ENCODE measurements at regions of chr3 and their contacts with region 1.

Region 1: GRCh38 chr3:99526921-99527320 is 111.5 kb upstream of the COL8A1 start:
- DNase-seq: no peak
- H3K4me3 ChIP-seq: no peak overlapping the region
- CTCF ChIP-seq: no peak

Region 2: DNA sequence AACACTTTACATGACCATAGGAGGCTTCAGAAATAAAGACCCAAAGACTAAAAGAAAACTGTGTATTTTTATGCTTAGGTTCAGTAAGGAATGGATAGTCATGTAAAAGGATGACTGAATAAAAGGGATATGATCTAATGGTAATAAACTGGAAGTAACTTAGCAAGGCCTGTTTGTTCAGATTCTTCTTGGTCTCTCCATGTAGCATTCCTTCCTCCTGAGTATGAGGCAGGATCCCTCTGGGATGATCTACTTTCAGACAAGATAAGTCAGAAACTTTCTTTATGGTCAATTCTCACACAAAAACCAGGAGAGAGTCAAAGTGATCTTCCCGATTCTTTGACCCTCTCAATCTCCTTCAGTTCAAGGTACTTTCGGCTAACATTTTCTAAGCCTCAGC is 284.6 kb before region 1 on chr3:
- CTCF ChIA-PET with region 1: no interaction called
- POLR2A ChIA-PET with region 1: no interaction called
- DNase-seq: peak; percentile 79
- H3K4me3 ChIP-seq: no peak overlapping the region
- CTCF ChIP-seq: no peak

Region 3: GRCh38 chr3:99568663-99569328 is 41.9 kb after region 1 on chr3:
- CTCF ChIA-PET with region 1: no interaction called
- POLR2A ChIA-PET with region 1: no interaction called
- DNase-seq: no peak
- H3K4me3 ChIP-seq: no peak overlapping the region
- CTCF ChIP-seq: no peak

Region 4: DNA sequence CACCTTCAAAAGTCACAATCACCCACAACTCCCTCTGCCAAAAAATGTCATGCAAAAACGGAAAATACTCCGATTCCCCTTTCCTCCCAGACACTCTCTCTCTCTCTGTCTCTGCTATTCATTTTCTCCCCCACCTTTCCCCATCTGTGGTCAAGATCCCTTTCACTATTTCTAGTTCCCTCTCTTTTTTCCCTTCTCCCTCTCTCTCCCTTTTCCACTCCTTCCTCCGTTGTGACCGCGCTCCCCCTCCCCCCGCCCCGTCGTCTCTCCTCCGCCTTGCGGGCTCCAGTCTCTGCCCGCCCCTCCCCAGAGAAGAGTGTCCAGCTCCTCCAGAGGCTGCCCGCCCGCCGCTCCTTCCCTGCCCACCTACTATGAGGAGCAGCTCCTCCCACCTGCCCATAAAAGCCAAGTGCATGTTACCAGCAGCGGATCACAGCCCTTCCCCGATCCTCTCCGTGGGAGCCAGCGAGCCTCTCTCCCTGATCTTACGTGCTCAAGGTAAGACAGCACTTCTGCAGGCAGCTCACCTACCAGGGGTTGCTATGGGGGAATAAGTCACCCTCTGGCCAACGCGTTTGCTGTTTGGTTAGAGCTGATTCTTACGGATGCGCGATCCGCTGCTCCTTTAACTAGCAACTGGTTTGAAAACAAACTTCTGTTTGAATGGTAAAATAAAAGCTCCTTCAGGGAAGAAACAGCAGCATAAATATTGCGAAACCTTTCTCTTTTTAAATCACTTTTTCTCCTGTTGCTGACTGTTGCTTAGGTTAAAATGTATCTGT is 111.4 kb after region 1 on chr3 and contains the start of gene COL8A1:
- CTCF ChIA-PET with region 1: interaction called, 4 read pairs
- POLR2A ChIA-PET with region 1: interaction called, 11 read pairs
- DNase-seq: no peak
- H3K4me3 ChIP-seq: peak within 1 kb of the TSS; percentile 84
- CTCF ChIP-seq: no peak

Region 5: DNA sequence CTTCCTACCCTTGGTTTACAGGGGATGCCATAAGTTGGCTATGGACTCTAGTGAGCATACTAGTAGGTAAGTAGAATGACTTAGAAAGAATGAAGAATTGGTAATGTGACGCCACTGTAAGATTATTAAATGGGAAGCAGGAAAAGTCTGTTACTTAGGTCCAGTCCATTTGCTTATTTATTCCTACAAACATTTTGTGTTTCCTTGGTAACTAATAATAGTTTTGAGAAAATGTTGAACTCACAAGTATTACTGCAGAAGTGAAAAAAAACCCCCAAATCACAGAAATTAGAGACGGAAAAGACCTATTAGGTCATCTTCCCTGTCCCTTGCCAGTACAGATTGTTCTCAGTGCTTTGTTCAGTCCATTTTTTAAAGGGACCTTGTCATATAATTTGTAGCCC is 354.2 kb after region 1 on chr3:
- CTCF ChIA-PET with region 1: no interaction called
- POLR2A ChIA-PET with region 1: no interaction called
- DNase-seq: no peak
- H3K4me3 ChIP-seq: no peak overlapping the region
- CTCF ChIP-seq: no peak